Activated CD4-positive, alpha-beta memory T cell treated with anti-CD3 and anti-CD28 coated beads, Interleukin-2, amount 10 ng/mL, durations not matched to agents 7 days and 5 days (primary cell): ENCODE measurements at regions of chr10 and their contacts with region 1.

Region 1: GRCh38 chr10:7410862-7411670 is at the start of gene SFMBT2:
- DNase-seq: peak; percentile 73
- H3K4me3 Mint-ChIP-seq: peak within 1 kb of the TSS; percentile 89
- H3K27ac Mint-ChIP-seq: peak within 1 kb of the TSS; percentile 79
- H3K4me1 Mint-ChIP-seq: peaks cover 45% of the 10 kb centered on the region
- H3K27me3 Mint-ChIP-seq: peaks cover 41% of the 10 kb centered on the region
- total RNA-seq, gene SFMBT2: 25.8 to 27.0 TPM

Region 2: DNA sequence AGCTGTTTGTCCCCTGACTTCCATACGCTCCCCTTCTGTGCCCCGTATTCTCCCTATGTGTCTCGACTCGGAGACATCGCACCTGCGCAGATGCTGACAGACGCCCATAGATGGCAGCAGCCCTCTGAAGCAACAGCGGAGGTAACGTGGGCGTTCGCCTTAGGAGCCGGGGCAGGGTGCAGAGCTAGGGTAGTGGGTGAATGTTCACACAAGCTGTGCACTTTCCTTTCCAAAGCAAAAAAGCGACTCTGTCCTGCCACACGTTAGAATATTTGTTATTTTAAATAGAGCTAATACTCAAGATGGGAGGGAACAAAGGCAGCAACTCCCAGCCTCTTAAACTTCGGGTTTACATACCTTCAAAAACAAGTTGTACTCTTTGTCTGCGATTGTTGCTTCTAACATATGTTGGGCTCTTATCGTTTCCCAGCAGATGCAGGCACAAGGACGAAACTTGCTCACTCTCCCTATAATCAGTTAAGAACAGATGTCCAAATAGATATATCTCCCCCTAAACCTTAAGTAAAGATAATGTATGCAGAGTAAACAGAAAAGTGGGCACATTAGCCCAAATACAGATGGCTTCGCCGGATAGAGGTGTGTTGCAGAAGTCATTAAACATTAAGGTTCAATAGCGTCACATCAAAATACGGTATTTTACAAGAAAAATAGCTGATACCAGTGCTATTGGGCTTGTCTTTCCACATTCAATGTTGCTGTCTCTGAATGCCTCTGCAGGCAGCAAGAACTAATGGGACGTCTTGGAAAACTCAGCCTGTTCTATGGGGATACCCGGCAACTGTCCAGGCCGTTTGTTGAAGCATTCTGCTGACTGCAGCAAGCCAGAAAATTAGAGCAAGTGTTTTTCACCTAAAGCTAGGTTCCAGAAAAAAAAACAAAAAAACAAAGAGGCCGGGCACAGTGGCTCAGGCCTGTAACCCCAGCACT is 490.7 kb before region 1 on chr10:
- CTCF ChIA-PET with region 1: interaction called, 65 read pairs
- POLR2A ChIA-PET with region 1: interaction called, 4 read pairs
- DNase-seq: peak; percentile 84
- H3K4me3 Mint-ChIP-seq: no peak overlapping the region
- H3K27ac Mint-ChIP-seq: no peak overlapping the region
- H3K4me1 Mint-ChIP-seq: peaks cover 30% of the 10 kb centered on the region
- H3K27me3 Mint-ChIP-seq: peaks cover 14% of the 10 kb centered on the region

Region 3: DNA sequence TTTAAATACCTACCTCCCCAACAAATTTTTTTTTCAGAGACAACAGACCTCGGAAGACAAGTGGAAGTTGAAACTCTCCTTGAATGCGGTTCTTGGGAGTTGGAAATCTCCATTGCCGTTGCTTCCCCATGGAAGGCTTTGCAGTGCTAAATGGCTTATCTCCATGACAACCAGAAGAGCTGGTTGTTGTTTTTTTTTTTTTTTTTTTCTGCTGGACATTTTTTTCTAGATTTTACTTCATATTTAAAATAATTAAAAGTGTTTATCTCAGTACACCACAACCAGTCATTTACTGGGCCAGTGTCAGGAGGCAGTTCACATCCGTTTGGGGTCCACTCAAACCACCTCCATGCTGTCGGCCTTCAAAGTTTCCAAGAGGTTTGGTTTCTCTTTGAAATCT is 482.5 kb before region 1 on chr10:
- CTCF ChIA-PET with region 1: interaction called, 3 read pairs
- POLR2A ChIA-PET with region 1: interaction called, 25 read pairs
- DNase-seq: no peak
- H3K4me3 Mint-ChIP-seq: peak overlapping the region; percentile 65
- H3K27ac Mint-ChIP-seq: peak overlapping the region; percentile 98
- H3K4me1 Mint-ChIP-seq: peaks cover 58% of the 10 kb centered on the region
- H3K27me3 Mint-ChIP-seq: peaks cover 2% of the 10 kb centered on the region

Region 4: DNA sequence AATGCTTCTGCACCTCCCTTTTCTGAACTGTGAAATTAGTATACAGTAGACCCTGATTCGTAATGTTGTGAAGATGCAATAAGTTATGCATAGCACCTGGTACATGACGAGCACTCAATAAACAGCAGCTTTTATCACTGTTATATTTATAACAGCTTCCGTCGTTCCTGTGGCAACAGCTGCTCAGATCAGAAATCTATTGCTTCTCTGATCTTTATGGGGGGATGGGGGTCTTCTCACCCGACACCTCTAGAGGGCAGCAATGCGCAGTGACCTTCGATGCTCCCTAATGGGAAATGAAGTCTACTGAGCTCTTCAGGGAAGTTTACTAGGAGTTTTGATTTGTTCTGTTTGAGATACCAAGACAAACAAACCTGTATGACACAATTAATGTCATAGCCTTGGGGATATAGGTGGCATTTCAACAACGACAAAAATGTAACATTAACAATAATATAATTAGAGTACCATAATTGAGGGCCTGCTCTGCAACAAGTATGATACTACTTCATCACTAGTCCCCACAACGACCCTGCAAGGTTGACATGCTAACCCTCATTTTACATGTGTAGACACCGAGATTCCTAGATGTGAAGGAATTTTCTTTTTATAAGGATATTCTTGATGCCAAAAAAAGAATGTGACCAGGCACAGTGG is 289.8 kb before region 1 on chr10:
- CTCF ChIA-PET with region 1: interaction called, 18 read pairs
- POLR2A ChIA-PET with region 1: no interaction called
- DNase-seq: peak; percentile 66
- H3K4me3 Mint-ChIP-seq: no peak overlapping the region
- H3K27ac Mint-ChIP-seq: no peak overlapping the region
- H3K4me1 Mint-ChIP-seq: peaks cover 3% of the 10 kb centered on the region
- H3K27me3 Mint-ChIP-seq: peaks cover 36% of the 10 kb centered on the region

Region 5: DNA sequence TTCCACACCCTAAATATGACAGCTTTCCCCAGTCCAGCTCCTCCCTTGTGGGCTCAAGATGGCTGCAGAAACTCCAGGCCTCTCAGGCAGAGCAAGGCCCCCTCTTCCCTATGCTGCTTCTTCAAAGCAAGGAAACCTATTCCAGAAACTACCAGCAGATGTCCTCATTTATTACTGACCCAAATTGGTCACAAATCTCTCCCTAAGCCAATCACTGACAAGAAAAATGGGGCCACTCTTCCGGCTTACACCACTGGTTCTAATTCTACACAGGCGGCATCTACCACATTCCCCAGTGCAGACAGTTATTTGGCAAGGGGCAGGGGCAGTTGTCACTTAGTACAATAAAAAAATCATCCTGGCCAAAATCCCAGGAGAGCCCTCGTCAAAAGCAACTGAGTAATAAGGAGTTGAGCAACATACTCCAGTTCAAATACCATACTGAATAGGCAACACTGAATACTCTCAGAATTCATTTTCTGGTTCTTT is 150.6 kb before region 1 on chr10:
- CTCF ChIA-PET with region 1: interaction called, 18 read pairs
- POLR2A ChIA-PET with region 1: interaction called, 8 read pairs
- DNase-seq: no peak
- H3K4me3 Mint-ChIP-seq: no peak overlapping the region
- H3K27ac Mint-ChIP-seq: peak overlapping the region; percentile 44
- H3K4me1 Mint-ChIP-seq: peaks cover 54% of the 10 kb centered on the region
- H3K27me3 Mint-ChIP-seq: no peaks in the 10 kb centered on the region

Region 6: GRCh38 chr10:7272008-7272407 is 139.1 kb before region 1 on chr10:
- CTCF ChIA-PET with region 1: interaction called, 5 read pairs
- POLR2A ChIA-PET with region 1: interaction called, 13 read pairs
- DNase-seq: peak; percentile 37
- H3K4me3 Mint-ChIP-seq: peak overlapping the region; percentile 25
- H3K27ac Mint-ChIP-seq: peak overlapping the region; percentile 85
- H3K4me1 Mint-ChIP-seq: peaks cover 68% of the 10 kb centered on the region
- H3K27me3 Mint-ChIP-seq: no peaks in the 10 kb centered on the region